ENCODE measurements at regions of chr16 and their contacts with region 1.

Region 1: GRCh38 chr16:2223375-2224182 is at the start of gene E4F1:
- H3K4me3 Mint-ChIP-seq: peak within 1 kb of the TSS; percentile 84
- H3K27ac Mint-ChIP-seq: peak within 1 kb of the TSS; percentile 81
- H3K4me1 Mint-ChIP-seq: peaks cover 28% of the 10 kb centered on the region
- H3K27me3 Mint-ChIP-seq: no peaks in the 10 kb centered on the region

Region 2: DNA sequence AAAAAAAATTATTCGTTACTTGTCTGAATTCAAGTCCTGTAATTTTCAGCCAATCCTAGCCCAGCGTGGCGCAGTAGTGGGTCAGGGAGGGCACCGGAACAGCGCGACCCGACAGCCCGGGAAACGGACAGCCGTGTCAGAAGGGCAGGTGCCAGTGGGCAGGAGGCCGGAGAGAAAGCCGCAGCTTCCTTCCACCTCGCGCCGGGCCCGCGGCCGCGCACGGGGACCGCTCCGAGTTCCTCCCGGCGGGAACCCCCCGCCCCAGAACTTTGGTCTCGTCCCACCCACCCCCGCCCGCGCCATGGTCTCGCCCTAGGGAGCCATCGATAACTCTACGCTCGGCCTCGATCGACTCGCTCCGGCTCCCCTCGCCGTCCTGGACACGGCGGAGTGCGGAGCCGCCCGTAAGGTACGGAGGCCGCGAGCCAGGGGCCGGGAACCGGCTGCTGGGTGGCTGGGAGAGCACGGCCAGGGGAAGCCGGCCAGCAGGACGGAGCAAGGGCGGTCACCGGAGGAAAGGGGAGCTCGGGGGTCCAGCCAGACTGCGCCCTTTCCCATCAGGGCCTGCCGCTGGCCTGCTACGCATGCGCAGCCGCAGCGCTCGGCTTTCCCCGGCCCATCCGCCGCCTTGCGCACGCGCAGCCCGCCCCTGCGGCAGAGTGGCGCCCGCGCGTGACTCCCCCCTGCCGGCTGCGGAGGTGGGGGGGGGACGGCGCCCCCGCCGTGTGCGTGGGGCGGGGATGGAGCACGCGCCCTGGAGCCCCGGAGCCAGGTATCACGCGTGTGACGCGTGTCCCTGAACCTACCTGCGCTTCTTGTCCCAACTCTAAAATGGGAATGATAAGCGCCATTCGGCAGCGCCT is 18.2 kb before region 1 on chr16 and contains the start of gene MLST8:
- intact Hi-C with region 1: loop called (anchors 1 kb)
- H3K4me3 Mint-ChIP-seq: peak within 1 kb of the TSS; percentile 85
- H3K27ac Mint-ChIP-seq: peak within 1 kb of the TSS; percentile 86
- H3K4me1 Mint-ChIP-seq: peaks cover 47% of the 10 kb centered on the region
- H3K27me3 Mint-ChIP-seq: peaks cover 21% of the 10 kb centered on the region

Region 3: GRCh38 chr16:2251483-2252240 is 28.1 kb after region 1 on chr16 and contains the start of gene ECI1:
- intact Hi-C with region 1: loop called (anchors 1 kb)
- H3K4me3 Mint-ChIP-seq: peak within 1 kb of the TSS; percentile 88
- H3K27ac Mint-ChIP-seq: peak within 1 kb of the TSS; percentile 85
- H3K4me1 Mint-ChIP-seq: peaks cover 12% of the 10 kb centered on the region
- H3K27me3 Mint-ChIP-seq: no peaks in the 10 kb centered on the region